BJ (cell line): ENCODE measurements at regions of chr10 and their contacts with region 1.

Region 1: GRCh38 chr10:119658253-119658673 is 7.1 kb downstream of the BAG3 start:
- DNase-seq: peak; percentile 64
- H3K4me3 ChIP-seq: no peak overlapping the region
- H3K27me3 ChIP-seq: no peaks in the 10 kb centered on the region
- CTCF ChIP-seq: no peak

Region 2: DNA sequence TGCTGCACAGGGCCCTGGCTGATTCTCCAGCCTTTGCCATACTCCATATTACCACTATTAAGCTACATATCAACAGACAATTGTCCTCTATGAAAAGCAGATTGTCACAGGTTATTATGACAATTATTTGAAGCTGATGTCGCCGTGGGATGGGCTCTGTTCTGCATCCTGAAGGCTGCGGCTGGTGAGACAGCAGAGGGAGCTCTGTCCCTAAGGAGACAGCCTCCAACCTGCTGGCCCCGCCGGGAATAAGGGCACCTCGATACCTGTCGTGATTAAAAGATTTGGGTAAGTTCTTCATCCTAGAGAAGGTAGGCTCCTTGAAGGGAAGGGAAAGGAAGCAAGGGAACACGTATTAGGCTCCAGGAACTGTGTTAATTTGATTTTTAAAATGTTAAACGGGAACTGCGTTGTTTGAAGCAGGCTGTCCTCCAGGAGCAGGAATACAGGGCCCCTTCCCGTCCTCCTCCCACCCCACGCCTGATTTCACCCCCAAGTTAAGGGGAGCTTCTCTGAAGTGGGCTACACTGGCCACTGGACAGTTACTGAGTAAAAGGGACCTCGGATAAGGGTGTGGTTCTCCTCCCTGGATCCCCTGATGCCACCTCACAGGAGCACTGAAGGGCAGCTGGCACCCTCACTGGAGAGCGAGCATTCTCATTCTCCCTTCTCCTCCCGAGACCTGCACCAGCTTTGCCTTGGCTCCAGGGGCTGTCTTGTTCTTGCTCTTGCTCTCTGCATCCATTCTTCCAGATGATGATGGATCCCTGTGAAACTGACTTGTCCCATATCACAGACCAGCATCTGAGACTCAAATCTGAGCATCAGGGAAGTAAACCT is 49.7 kb before region 1 on chr10:
- CTCF ChIA-PET with region 1: interaction called, 18 read pairs
- POLR2A ChIA-PET with region 1: no interaction called
- DNase-seq: no peak
- H3K4me3 ChIP-seq: no peak overlapping the region
- H3K27me3 ChIP-seq: no peaks in the 10 kb centered on the region; the same call in 1 of the 2 replicates
- CTCF ChIP-seq: peak; percentile 83